Heart right ventricle (tissue), 16 donors: ENCODE measurements at regions of chr6 and their contacts with region 1.

Region 1: DNA sequence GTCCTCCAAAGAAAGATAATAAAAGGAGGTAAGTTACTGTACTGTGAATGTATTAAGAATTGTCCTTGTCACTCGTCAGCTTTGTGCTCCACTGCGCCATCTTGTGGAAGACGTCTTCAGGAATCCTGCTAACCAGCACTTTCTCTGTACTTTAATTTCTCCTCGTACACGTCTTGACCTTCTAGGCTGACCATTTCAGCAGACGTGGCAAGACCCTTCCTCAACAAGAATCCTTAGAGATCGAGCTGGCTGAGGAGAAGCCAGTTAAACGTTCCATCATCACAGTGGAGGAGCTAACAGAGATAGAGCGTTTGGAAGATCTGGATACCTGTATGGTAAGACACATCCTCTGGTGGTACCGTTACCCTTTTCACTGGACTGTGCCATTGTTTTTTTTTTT is 95.5 kb upstream of the SCGN start:
- DNase-seq: peak; percentile 62 to 83
- ATAC-seq: peak in 4 of 8 donors; percentile 49 to 67 (median 59)
- H3K4me3 ChIP-seq: no peak overlapping the region
- H3K27ac ChIP-seq: no peak overlapping the region
- H3K4me1 ChIP-seq: peaks cover 0 to 4% (median 0%) of the 10 kb centered on the region in 9 donors
- H3K27me3 ChIP-seq: no peaks in the 10 kb centered on the region
- CTCF ChIP-seq: peak; percentile 43 to 90 (median 85)

Region 2: DNA sequence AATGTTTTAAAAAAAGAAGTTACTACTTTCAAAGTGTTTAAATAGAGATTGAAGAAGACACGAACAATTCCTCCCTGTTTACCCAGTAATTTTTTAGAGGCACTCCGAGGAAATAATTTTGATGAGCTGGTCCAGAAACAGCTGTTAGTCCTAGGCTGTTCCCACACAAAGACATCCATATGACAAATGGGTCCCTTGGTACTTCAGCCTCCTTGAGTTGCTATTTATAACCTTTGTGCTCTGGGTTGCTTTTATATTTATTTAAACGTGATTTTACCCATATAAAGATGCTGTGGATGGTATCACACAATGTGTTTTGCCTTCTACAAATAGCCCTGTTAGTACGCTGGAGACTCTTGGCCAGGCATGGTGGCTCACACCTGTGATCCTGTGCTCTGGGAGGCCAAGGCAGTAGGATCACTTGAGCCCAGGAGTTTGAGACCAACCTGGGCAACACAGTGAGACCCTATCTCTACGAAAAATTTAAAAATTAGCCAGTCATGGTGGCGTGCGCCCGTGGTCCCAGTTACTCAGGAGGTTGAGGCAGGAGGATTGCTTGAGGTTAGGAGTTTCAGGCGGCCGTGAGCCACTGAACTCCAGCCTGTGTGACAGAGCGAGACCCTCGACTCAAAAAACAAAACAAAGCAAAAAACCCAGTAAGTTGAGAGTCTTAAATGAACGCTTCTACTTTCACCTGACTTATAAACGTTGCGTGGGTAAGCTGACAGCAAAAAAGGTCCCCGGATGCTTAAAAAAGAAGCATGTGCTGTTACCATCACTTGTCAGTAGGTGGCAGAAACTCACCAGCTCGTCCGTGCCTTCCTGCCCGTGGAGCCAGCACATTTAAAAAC is 700.9 kb before region 1 on chr6:
- intact Hi-C with region 1: no loop called
- DNase-seq: peak; percentile 21 to 63
- ATAC-seq: peak; percentile 55 to 86 (median 70)
- H3K4me3 ChIP-seq: peak overlapping the region in 1 of 10 donors; percentile 4
- H3K27ac ChIP-seq: peak overlapping the region in 5 of 10 donors; percentile 3 to 88 (median 50)
- H3K4me1 ChIP-seq: peaks cover 0 to 56% (median 16%) of the 10 kb centered on the region in 9 donors
- H3K27me3 ChIP-seq: no peaks in the 10 kb centered on the region
- CTCF ChIP-seq: peak; percentile 83 to 96 (median 89)

Region 3: DNA sequence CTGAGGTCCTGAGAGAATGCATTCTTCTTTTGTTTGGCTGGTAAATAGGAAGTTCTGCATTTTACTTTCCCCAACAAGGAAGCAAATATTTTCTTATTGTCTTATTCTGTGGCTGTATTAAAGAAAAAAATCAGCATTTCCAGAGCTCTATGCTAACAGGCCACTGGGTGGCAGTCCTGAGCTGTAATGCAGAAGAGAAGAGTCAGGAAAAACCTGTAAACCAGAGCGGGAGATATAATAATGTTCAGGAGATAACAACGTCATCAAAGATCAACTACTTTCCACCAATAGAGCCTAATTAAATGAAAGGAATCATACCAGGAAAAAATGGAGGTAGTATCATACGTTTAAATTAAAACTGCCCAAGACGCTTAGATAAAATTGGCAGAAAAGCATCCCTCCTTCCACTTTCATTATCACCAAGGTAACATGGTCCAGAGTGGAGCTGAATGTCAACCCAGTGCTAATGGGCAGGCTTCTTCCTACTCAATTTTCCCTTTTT is 333.0 kb before region 1 on chr6:
- intact Hi-C with region 1: loop called in 8 of 10 experiments (anchors 1 to 5 kb)
- DNase-seq: peak; percentile 56 to 68
- ATAC-seq: peak in 6 of 8 donors; percentile 64 to 79 (median 75)
- H3K4me3 ChIP-seq: peak overlapping the region in 7 of 10 donors; percentile 6 to 37 (median 34)
- H3K27ac ChIP-seq: peak overlapping the region in 6 of 10 donors; percentile 5 to 59 (median 22)
- H3K4me1 ChIP-seq: peaks cover 0 to 42% (median 16%) of the 10 kb centered on the region in 9 donors
- H3K27me3 ChIP-seq: peaks cover 0 to 2% (median 0%) of the 10 kb centered on the region in 7 donors
- CTCF ChIP-seq: peak; percentile 82 to 96 (median 87)

Region 4: DNA sequence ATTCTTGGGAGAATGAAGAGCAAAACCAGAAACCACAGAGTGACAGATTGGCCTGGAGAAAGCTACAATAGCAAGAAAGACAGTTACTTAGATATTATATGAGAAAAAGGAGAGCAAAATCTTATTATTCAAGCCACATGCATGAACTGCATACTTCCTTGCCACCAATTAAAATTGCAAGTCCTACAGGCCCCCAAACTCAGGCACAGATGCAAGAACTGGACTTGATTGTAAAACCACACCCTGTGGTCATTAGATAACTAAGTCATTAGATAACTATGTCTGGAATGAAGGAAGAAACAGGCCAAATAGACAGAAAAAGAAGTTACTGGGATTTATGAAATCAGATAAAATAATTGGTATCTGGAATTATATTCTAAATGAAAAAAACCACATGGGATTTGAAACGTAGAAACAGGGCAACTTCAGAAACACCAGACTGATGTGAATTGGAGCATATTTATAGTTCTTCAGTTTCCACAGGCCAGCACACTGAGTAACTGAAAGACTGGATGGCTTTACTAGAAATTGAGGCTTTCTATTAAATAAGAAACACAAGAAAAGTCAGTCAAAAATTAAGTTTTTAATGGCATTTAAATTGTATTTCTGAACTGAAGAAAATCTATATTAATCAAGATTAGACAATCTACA is 326.7 kb before region 1 on chr6:
- intact Hi-C with region 1: loop called in 3 of 10 experiments (anchors 5 kb)
- DNase-seq: no peak
- ATAC-seq: peak in 4 of 8 donors; percentile 25 to 61 (median 46)
- H3K4me3 ChIP-seq: no peak overlapping the region
- H3K27ac ChIP-seq: peak overlapping the region in 4 of 10 donors; percentile 33 to 47 (median 41)
- H3K4me1 ChIP-seq: peaks cover 0 to 15% (median 0%) of the 10 kb centered on the region in 9 donors
- H3K27me3 ChIP-seq: no peaks in the 10 kb centered on the region
- CTCF ChIP-seq: no peak

Region 5: GRCh38 chr6:25263657-25264056 is 292.9 kb before region 1 on chr6:
- intact Hi-C with region 1: loop called in 3 of 10 experiments (anchors 1 to 5 kb)
- DNase-seq: no peak
- ATAC-seq: no peak
- H3K4me3 ChIP-seq: no peak overlapping the region
- H3K27ac ChIP-seq: no peak overlapping the region
- H3K4me1 ChIP-seq: peaks cover 0 to 7% (median 0%) of the 10 kb centered on the region in 9 donors
- H3K27me3 ChIP-seq: no peaks in the 10 kb centered on the region
- CTCF ChIP-seq: no peak

Region 6: DNA sequence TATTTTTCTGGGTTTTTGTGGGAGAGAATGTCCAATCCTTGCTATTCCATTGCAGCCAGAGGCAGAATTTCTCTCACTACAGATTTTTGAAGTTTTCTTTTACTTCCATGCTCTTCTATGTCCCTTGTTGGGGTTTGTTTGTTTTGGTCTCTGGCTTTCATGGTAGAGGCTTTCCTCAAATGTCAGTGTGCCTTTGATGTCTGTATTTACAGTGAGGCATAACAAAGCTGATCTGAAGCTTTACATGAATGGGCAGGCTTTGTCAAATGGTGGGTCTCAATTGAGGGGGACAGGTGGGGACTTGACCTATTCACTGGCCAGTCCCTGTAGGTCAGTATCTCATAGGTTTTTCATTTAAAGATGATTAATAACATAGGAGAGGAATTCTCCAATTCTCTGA is 286.0 kb before region 1 on chr6:
- intact Hi-C with region 1: loop called in 6 of 10 experiments (anchors 1 to 10 kb)
- DNase-seq: no peak
- ATAC-seq: no peak
- H3K4me3 ChIP-seq: no peak overlapping the region
- H3K27ac ChIP-seq: no peak overlapping the region
- H3K4me1 ChIP-seq: peaks cover 0 to 6% (median 0%) of the 10 kb centered on the region in 9 donors
- H3K27me3 ChIP-seq: peaks cover 0 to 15% (median 6%) of the 10 kb centered on the region in 7 donors
- CTCF ChIP-seq: no peak

Region 7: GRCh38 chr6:25278914-25279747 is 277.4 kb before region 1 on chr6 and contains the start of gene CARMIL1:
- intact Hi-C with region 1: loop called in 3 of 10 experiments (anchors 5 to 10 kb)
- DNase-seq: peak; percentile 75 to 78
- ATAC-seq: peak; percentile 88 to 96 (median 94)
- H3K4me3 ChIP-seq: peak within 1 kb of the TSS; percentile 59 to 96 (median 79)
- H3K27ac ChIP-seq: peak within 1 kb of the TSS; percentile 53 to 84 (median 67)
- H3K4me1 ChIP-seq: peaks cover 8 to 26% (median 18%) of the 10 kb centered on the region in 9 donors
- H3K27me3 ChIP-seq: peaks cover 0 to 33% (median 14%) of the 10 kb centered on the region in 7 donors
- CTCF ChIP-seq: peak; percentile 46 to 84 (median 69)
- total RNA-seq, gene CARMIL1: 1.2 to 10.3 (median 4.1) TPM

Region 8: GRCh38 chr6:25889877-25890853 is 333.6 kb after region 1 on chr6:
- intact Hi-C with region 1: loop called in 1 of 10 experiments (anchors 10 kb)
- DNase-seq: peak in 1 of 2 donors; percentile 26
- ATAC-seq: peak in 4 of 8 donors; percentile 28 to 69 (median 56)
- H3K4me3 ChIP-seq: no peak overlapping the region
- H3K27ac ChIP-seq: no peak overlapping the region
- H3K4me1 ChIP-seq: no peaks in the 10 kb centered on the region
- H3K27me3 ChIP-seq: peaks cover 0 to 2% (median 0%) of the 10 kb centered on the region in 7 donors
- CTCF ChIP-seq: peak in 8 of 9 donors; percentile 14 to 67 (median 48)